H1 (cell line): ENCODE measurements at regions of chr15 and their contacts with region 1.

Region 1: DNA sequence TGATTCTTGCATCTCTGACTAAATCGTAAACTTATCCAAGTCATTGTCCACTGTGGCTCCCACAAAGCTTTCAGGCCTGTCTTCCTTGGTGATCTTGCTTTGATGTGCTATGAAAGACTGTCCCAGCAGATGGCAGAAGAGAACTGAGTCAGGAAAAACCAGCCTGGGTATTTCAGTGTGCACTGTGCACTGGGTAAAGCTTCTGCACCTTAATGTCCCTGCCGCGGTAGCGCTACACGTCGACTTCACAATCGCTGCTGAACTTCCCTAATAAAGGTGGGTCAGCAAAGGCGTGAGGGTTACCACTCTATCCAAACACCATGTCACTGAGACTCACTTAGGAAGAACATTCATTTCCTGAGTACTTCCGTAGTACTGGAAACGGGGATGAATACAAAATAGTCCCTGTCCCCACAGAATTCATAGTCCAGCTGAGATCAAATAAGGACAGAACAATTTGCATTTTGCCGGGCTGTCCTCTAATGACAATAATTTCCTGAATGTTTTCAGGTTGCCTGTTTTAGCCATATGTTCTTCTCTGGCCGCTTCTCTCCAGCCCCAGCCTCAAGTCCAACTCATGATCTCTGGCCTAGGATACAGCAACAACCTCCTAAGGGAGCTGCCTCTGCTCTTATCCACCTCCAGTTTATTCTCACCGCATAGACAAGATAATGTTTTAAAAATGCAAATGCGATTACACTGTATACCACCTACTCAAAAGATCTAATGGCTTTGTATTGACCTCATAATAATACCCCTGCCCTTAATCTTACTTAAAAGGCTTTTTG is 83.6 kb upstream of the AKAP13 start:
- DNase-seq: peak in 1 of 2 experiments; percentile 69
- H3K4me3 ChIP-seq: no peak overlapping the region
- H3K27ac ChIP-seq: no peak overlapping the region
- H3K4me1 ChIP-seq: no peaks in the 10 kb centered on the region; a peak in 1 of 7 replicates
- H3K27me3 ChIP-seq: no peaks in the 10 kb centered on the region
- CTCF ChIP-seq: peak; percentile 28 to 73 (median 72)
- EP300 ChIP-seq: no peak
- POLR2A ChIP-seq: no peak
- RAD21 ChIP-seq: peak; percentile 88 to 89

Region 2: GRCh38 chr15:85312486-85312885 is 15.7 kb after region 1 on chr15:
- CTCF ChIA-PET with region 1: interaction called, 11 read pairs
- POLR2A ChIA-PET with region 1: no interaction called
- DNase-seq: no peak
- H3K4me3 ChIP-seq: no peak overlapping the region
- H3K27ac ChIP-seq: no peak overlapping the region
- H3K4me1 ChIP-seq: peaks cover 0 to 10% (median 2%) of the 10 kb centered on the region in 4 experiments; a peak in 4 of 7 replicates
- H3K27me3 ChIP-seq: no peaks in the 10 kb centered on the region; a peak in 1 of 7 replicates
- CTCF ChIP-seq: no peak
- EP300 ChIP-seq: no peak
- POLR2A ChIP-seq: no peak
- RAD21 ChIP-seq: no peak

Region 3: DNA sequence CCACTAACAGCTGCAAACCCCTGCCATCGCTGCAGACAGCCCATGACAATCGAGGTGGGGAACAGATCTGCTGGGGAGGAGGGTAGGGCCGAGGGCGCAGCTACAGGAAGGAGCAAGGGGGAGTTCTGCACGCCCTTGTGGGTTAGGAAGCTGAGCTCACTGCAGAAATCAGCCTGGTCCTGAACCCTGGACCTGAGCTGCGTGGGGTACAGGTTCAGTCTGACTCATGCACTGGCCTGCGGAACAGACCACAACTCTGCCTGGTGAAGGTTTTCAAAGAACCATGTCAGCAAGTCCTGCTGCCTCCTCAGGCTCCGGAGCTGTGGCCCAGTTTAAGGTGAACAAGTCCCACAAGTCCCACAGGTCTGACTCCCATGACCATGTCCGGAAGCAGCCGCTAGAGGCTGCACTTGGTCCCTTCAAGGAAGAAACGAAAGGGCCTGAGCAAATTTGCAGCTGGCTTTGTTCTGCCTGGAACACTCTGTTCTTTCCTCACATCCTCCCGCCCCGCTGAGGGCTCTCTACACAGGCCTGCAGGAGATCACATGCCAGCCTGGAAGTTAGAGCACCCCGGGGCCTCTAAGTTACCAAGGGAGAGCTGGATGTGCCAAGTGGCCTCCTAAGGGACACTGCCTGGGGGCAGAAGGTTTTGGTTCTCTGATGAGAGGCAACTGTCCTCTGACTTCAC is 34.2 kb after region 1 on chr15:
- CTCF ChIA-PET with region 1: interaction called, 14 read pairs
- POLR2A ChIA-PET with region 1: no interaction called
- DNase-seq: peak; percentile 77 to 85
- H3K4me3 ChIP-seq: no peak overlapping the region
- H3K27ac ChIP-seq: no peak overlapping the region
- H3K4me1 ChIP-seq: peaks cover 0 to 4% (median 2%) of the 10 kb centered on the region in 4 experiments; a peak in 4 of 7 replicates
- H3K27me3 ChIP-seq: no peaks in the 10 kb centered on the region
- CTCF ChIP-seq: peak; percentile 86 to 98 (median 91)
- EP300 ChIP-seq: no peak
- POLR2A ChIP-seq: no peak
- RAD21 ChIP-seq: peak; percentile 95 to 97